ENCODE measurements at regions of chr9 and their contacts with region 1.

Region 1: DNA sequence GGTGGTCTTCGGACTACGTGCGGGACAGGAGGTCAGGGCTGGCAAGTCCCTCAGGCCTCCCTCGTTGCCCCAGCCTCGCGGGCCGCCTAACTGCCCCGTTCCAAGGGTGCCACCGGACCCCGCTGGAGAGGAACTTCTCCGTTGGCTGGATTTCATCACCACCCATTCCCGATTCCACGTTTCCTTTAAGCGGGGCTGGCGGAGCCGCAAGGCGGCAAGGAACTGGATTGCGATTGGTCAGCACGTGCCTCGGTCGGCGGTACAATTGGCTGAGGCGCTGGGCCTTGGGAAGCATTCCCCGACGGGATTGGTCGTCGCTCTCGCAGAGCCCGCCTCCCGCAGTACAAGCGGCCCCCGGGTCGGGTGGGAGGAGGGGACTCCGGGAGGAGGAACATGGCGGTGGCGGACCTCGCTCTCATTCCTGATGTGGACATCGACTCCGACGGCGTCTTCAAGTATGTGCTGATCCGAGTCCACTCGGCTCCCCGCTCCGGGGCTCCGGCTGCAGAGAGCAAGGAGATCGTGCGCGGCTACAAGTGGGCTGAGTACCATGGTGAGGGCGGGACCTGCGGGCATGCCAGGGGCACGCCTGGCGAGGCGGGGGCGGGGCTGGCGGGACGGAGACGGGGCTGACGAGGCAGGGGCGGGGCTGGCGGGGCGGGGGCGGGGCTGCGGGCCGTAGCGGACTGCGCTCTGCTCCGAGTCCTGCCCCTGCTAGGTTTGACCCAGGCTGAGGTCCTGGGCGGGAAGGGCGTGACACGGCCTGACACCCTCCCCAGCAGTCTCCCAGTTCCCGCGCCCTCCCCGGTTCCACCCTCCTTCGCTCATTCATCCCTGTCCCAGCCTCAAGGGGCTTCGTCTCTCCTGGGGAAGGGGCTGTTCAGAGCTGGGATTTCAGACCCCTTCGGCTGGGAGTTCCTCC is at the start of gene PHPT1:
- DNase-seq: peak; percentile 98 to 100 (median 99)

Region 2: GRCh38 chr9:136944519-136945279 is 95.4 kb after region 1 on chr9 and contains the starts of genes C8G and FBXW5:
- intact Hi-C with region 1: loop called (anchors 10 kb)
- DNase-seq: peak; percentile 86 to 99 (median 92)